Calu3 (cell line): ENCODE measurements at regions of chr6 and their contacts with region 1.

Region 1: DNA sequence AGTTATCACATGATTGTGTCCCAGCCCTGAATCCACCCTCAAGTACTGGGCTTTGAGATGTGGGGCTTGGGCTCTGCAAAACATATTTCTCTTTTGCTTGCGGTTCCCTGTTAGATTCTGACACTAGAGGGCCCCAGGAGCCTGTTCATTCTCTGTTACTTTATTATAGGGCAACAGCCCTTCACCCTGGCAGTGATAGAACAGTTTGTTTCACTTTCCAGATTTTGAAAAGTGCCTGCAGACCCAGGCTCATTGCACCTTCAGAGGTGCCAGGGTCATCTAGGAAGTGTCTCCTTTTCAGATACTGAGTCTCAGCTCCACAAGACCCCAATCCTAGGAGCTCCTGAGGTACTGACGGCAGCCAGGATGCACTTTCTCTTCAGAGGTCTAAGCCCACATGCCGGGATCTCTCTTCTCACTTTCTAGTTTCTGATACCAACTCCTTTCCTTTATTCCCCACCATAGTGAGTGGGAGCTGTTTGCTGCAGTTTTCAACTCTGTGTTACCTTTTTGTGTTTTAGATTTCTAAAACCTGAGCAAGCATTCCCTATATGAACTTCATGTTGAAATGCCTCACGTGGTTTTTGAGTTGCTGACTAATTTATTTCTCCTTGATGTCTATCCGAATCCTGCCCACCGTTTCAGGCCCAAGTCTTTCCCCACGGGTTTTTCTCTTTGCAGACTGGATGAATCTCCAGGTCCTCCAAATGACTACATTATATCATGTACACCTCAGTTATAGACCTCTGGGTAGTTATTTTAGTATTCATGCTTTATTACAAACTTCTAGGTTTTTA is 10.9 kb downstream of the ABT1 start:
- DNase-seq: peak; percentile 74
- H3K4me3 Mint-ChIP-seq: peak overlapping the region; percentile 17
- H3K27ac Mint-ChIP-seq: no peak overlapping the region
- H3K4me1 Mint-ChIP-seq: peaks cover 7% of the 10 kb centered on the region
- H3K27me3 Mint-ChIP-seq: peaks cover 16% of the 10 kb centered on the region
- CTCF ChIP-seq: peak; percentile 49

Region 2: GRCh38 chr6:26118999-26119398 is 488.6 kb before region 1 on chr6:
- CTCF ChIA-PET with region 1: no interaction called
- intact Hi-C with region 1: no loop called
- DNase-seq: peak; percentile 81
- H3K4me3 Mint-ChIP-seq: no peak overlapping the region
- H3K27ac Mint-ChIP-seq: peak overlapping the region; percentile 91
- H3K4me1 Mint-ChIP-seq: peaks cover 20% of the 10 kb centered on the region
- H3K27me3 Mint-ChIP-seq: peaks cover 9% of the 10 kb centered on the region
- CTCF ChIP-seq: no peak

Region 3: GRCh38 chr6:27078734-27079357 is 471.2 kb after region 1 on chr6:
- CTCF ChIA-PET with region 1: no interaction called
- intact Hi-C with region 1: loop called (anchors 1 kb)
- DNase-seq: peak; percentile 73
- H3K4me3 Mint-ChIP-seq: peak overlapping the region; percentile 64
- H3K27ac Mint-ChIP-seq: no peak overlapping the region
- H3K4me1 Mint-ChIP-seq: no peaks in the 10 kb centered on the region
- H3K27me3 Mint-ChIP-seq: no peaks in the 10 kb centered on the region
- CTCF ChIP-seq: peak; percentile 85

Region 4: DNA sequence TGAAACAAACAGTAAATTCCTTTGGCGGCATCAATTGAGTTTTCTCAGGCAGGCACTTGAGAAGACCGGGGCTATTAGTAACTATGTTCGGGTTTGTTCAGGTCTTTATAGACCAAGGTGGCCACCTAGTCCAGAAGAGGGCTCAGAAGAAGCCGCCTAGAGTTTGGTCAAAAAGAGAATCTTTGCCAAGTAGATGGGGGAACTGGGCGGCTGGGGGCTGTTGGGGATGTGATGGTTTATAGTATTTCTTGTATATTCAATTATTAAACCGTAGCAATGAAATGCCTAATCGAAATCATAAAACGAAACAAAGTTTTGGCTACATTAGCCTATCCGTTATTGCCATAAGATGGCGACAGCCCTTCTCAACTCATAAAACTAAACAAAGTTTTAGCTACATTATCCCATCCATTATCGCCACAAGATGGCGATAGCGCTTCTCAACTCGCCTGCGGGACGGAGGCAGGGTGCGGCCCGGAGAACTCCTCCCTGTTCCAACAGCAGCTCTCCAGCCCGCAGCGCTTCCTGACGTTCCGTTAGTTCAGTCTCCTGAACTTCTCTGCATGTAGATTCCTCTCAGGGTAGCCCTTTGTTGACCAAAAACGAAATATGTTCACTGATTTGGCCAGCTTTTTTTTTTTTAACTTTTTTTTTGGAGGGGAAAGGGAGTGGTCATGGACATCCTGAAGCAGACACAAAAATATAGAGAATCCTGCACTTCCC is 519.3 kb after region 1 on chr6:
- CTCF ChIA-PET with region 1: interaction called, 3 read pairs
- intact Hi-C with region 1: loop called (anchors 2 kb)
- DNase-seq: peak; percentile 90
- H3K4me3 Mint-ChIP-seq: peak overlapping the region; percentile 66
- H3K27ac Mint-ChIP-seq: peak overlapping the region; percentile 65
- H3K4me1 Mint-ChIP-seq: peaks cover 18% of the 10 kb centered on the region
- H3K27me3 Mint-ChIP-seq: no peaks in the 10 kb centered on the region
- CTCF ChIP-seq: peak; percentile 85

Region 5: DNA sequence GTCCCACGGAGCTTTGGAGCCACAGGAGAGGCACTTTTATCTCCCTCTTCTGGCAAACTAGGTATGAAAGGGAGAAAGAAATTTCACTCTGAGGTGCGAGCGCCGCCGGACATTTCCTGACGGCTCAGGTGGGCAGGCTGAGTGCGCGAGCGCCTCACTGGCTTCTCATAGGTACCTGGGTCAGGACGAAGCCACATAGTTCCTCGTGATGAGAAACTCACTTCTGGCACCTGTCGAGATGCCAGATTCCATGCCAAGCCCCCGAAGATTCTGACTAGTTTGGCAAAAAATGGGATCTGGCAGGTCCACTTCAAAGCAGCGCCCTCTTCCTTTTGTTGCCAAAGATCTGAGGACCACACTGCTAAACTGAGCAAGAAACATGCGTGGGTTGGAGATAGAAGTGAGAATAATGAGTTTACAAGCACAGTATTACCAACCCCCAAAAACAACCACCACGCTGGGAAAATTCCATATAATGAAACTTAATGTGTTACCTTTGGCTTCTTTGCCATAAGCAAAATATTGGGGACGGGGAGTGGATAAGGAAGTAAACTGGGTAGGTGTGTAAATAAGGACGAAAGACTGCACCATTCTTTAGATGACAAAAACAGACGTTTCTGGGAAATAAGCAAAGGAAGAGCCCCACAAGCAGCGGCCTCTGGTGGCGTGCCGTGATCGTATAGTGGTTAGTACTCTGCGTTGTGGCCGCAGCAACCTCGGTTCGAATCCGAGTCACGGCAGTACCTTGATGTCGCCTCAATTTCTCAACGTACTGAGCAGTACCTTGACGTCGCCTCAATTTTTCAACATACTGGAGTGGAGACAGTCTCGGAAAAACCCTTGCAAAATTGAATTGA is 550.1 kb after region 1 on chr6:
- CTCF ChIA-PET with region 1: no interaction called
- intact Hi-C with region 1: loop called (anchors 2 kb)
- DNase-seq: peak; percentile 79
- H3K4me3 Mint-ChIP-seq: peak overlapping the region; percentile 81
- H3K27ac Mint-ChIP-seq: peak overlapping the region; percentile 79
- H3K4me1 Mint-ChIP-seq: peaks cover 27% of the 10 kb centered on the region
- H3K27me3 Mint-ChIP-seq: no peaks in the 10 kb centered on the region
- CTCF ChIP-seq: peak; percentile 51